MCF 10A (cell line): ENCODE measurements at regions of chr14 and their contacts with region 1.

Region 1: DNA sequence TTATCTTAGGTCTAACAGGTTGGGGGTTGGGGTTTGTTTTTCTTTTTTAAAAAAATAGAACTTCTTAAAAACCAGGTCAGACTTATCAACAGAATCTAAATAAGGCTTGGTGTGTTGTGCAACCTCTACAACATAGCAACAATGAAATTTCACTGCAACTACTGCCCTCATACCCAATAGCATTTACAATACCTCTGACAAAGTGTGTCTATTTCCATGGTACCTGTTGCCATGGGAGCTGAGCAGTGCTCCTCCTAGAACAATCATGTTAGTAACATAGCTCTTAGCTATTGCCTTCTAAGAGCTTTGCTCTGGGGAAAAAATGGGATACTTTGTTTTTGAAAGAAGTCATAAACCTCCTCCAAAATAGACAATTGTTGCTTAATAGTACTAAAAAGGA is 103.3 kb upstream of the CCDC175 start:
- DNase-seq: peak; percentile 58
- H3K4me3 Mint-ChIP-seq: no peak overlapping the region
- H3K27ac Mint-ChIP-seq: peak overlapping the region; percentile 92
- H3K4me1 Mint-ChIP-seq: peaks cover 27% of the 10 kb centered on the region
- H3K27me3 Mint-ChIP-seq: no peaks in the 10 kb centered on the region
- CTCF ChIP-seq: no peak

Region 2: DNA sequence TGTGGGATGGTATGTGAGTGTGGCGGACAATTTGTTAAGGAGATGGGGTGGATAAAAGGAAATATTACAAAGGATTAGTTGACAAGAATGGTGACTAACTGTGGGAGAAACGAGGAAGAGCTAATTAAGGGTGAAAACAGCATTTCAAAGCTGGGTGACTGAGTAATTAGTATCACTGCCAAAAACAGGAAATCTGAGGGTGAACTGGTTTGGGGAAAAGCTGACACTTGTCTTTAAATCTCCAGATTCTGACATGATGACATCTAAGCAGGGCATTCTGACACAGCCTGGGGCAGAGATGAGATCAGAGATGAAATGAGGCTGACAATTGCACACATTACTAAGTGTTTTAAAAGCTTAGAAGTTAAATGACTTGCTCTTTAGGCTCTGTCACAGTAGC is 60.8 kb before region 1 on chr14:
- CTCF ChIA-PET with region 1: no interaction called
- POLR2A ChIA-PET with region 1: no interaction called
- intact Hi-C with region 1: no loop called
- DNase-seq: peak; percentile 3
- H3K4me3 Mint-ChIP-seq: no peak overlapping the region
- H3K27ac Mint-ChIP-seq: no peak overlapping the region
- H3K4me1 Mint-ChIP-seq: peaks cover 25% of the 10 kb centered on the region
- H3K27me3 Mint-ChIP-seq: no peaks in the 10 kb centered on the region
- CTCF ChIP-seq: no peak

Region 3: DNA sequence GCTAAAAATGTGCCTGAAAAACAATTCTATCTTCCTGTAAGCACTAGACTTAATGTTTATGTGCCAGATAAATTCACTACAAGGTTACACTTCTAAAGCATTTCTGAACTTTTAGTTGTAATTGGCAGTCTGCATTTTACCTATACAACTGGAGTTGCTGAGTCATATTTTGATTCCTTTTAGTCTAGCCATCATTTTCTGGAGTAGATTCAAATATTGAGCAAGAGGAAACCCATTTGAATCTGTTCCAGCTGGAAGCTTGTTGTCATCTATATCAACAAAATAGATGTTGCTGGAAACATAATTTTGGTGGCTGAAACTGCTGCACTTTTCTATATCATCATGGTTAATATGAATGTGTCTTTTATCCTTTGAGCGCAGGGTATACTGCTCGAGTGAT is 18.9 kb after region 1 on chr14:
- CTCF ChIA-PET with region 1: interaction called, 3 read pairs
- POLR2A ChIA-PET with region 1: interaction called, 41 read pairs
- intact Hi-C with region 1: no loop called
- DNase-seq: peak; percentile 92
- H3K4me3 Mint-ChIP-seq: peak overlapping the region; percentile 53
- H3K27ac Mint-ChIP-seq: peak overlapping the region; percentile 98
- H3K4me1 Mint-ChIP-seq: peaks cover 48% of the 10 kb centered on the region
- H3K27me3 Mint-ChIP-seq: no peaks in the 10 kb centered on the region
- CTCF ChIP-seq: no peak

Region 4: DNA sequence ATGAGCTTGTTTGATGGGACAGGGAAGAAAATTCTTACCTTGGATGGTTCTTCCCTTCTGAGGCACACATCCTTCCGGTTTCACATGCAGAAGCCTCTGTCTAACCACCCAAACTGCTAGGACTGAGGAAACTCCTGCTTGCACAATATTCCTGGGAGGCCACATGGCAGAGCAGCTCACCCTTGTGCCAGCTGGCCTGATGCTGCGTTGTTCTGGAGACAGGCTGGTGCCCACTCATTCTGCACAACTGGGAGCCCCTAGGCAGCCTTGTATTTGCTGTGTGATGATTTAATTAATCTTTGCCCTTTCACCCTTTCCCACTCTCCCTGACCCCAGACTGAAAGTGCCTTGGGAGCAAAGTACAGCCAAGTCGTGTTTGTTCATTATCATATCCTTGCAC is 59.9 kb after region 1 on chr14:
- CTCF ChIA-PET with region 1: no interaction called
- POLR2A ChIA-PET with region 1: no interaction called
- intact Hi-C with region 1: no loop called
- DNase-seq: peak; percentile 47
- H3K4me3 Mint-ChIP-seq: no peak overlapping the region
- H3K27ac Mint-ChIP-seq: no peak overlapping the region
- H3K4me1 Mint-ChIP-seq: peaks cover 7% of the 10 kb centered on the region
- H3K27me3 Mint-ChIP-seq: no peaks in the 10 kb centered on the region
- CTCF ChIP-seq: no peak